ENCODE measurements at regions of chr20 and their contacts with region 1.

Region 1: DNA sequence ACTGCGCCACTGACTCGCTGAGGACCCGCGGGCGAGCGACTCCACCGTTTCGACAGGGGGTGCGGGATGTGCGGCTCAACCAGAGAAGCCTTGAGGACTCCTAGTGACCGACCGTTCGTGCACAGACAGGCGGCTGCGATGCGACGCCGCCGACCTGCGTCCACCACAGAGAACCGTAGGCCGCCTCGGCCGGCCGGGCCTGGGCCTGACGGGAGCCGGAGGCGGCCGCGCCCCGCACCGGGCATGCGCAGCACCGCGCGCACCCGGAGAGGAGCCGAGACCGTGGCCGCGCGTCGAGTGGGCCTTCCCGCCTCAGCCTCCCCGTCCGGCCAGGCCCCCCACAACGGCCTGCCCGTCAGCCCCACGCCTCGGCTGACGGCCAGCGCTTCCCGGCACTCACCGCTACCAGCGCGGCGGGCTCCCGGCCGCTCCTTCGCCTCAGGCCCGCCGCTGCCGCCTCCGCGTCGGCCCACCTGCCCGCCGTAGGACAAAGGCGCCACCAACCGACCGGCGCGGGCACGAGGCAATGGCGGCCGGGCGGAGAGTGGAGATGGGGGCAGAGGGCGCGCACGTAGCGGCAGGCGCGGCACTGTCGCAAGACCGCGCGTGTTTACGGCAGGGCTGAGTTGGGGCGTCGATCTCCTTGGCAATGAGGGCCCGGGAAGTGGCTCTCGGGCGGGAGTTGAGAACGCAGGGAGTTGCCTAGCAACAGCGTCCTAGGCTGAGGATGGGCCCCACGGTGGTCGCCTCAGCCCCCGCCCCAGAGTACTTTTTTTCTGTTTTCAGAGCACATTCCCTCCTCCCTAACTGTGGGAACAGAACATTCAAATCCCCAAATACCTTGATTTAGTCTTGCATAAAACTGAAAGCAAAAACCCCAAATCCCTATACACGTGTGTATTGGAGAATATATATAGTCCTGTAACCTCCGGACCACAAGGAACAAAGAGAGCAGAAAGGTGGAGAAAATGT is at the start of gene NCOA5:
- DNase-seq: peak; percentile 97
- ATAC-seq: peak; percentile 92
- H3K4me3 ChIP-seq: peak within 1 kb of the TSS; percentile 71 to 86 (median 81)
- H3K4me3 Mint-ChIP-seq: peak within 1 kb of the TSS; percentile 93
- H3K27ac ChIP-seq: peak within 1 kb of the TSS; percentile 71 to 94
- H3K27ac Mint-ChIP-seq: peak within 1 kb of the TSS; percentile 90
- H3K4me1 ChIP-seq: peaks cover 21 to 38% of the 10 kb centered on the region in 2 donors
- H3K4me1 Mint-ChIP-seq: peaks cover 47% of the 10 kb centered on the region
- H3K27me3 ChIP-seq: no peaks in the 10 kb centered on the region
- H3K27me3 Mint-ChIP-seq: no peaks in the 10 kb centered on the region
- CTCF ChIP-seq: peak; percentile 32
- total RNA-seq, gene NCOA5: 41.6 and 44.1 TPM in 2 replicates

Region 2: GRCh38 chr20:46108435-46108841 is 18.7 kb after region 1 on chr20:
- CTCF ChIA-PET with region 1: interaction called, 3 read pairs
- POLR2A ChIA-PET with region 1: no interaction called
- intact Hi-C with region 1: loop called (anchors 1 kb)
- DNase-seq: peak; percentile 89
- ATAC-seq: peak; percentile 90
- H3K4me3 ChIP-seq: peak overlapping the region in 1 of 5 experiments; percentile 11
- H3K4me3 Mint-ChIP-seq: peak overlapping the region; percentile 59
- H3K27ac ChIP-seq: peak overlapping the region; percentile 85 to 89
- H3K27ac Mint-ChIP-seq: peak overlapping the region; percentile 86
- H3K4me1 ChIP-seq: peaks cover 43 to 44% of the 10 kb centered on the region in 2 donors
- H3K4me1 Mint-ChIP-seq: peaks cover 48% of the 10 kb centered on the region
- H3K27me3 ChIP-seq: no peaks in the 10 kb centered on the region
- H3K27me3 Mint-ChIP-seq: no peaks in the 10 kb centered on the region
- CTCF ChIP-seq: peak; percentile 38

Region 3: GRCh38 chr20:46230801-46231282 is 141.1 kb after region 1 on chr20:
- CTCF ChIA-PET with region 1: no interaction called
- POLR2A ChIA-PET with region 1: no interaction called
- intact Hi-C with region 1: no loop called
- DNase-seq: no peak
- ATAC-seq: no peak
- H3K4me3 ChIP-seq: no peak overlapping the region
- H3K4me3 Mint-ChIP-seq: no peak overlapping the region
- H3K27ac ChIP-seq: no peak overlapping the region
- H3K27ac Mint-ChIP-seq: no peak overlapping the region
- H3K4me1 ChIP-seq: no peaks in the 10 kb centered on the region
- H3K4me1 Mint-ChIP-seq: no peaks in the 10 kb centered on the region
- H3K27me3 ChIP-seq: peaks cover 0 to 27% (median 0%) of the 10 kb centered on the region in 4 experiments
- H3K27me3 Mint-ChIP-seq: peaks cover 33% of the 10 kb centered on the region
- CTCF ChIP-seq: no peak

Measured in B cell (primary cell).